ENCODE measurements at regions of chr2 and their contacts with region 1.

Region 1: GRCh38 chr2:71157124-71157793 is 26.8 kb downstream of the MPHOSPH10 start:
- DNase-seq: peak; percentile 31 to 75 (median 48)
- ATAC-seq: peak; percentile 70
- H3K4me3 ChIP-seq: no peak overlapping the region
- H3K4me3 Mint-ChIP-seq: no peak overlapping the region
- H3K27ac ChIP-seq: no peak overlapping the region
- H3K27ac Mint-ChIP-seq: no peak overlapping the region
- H3K4me1 ChIP-seq: peaks cover 10% of the 10 kb centered on the region
- H3K4me1 Mint-ChIP-seq: peaks cover 7% of the 10 kb centered on the region
- H3K27me3 ChIP-seq: no peaks in the 10 kb centered on the region
- H3K27me3 Mint-ChIP-seq: peaks cover 20% of the 10 kb centered on the region
- CTCF ChIP-seq: peak; percentile 66

Region 2: DNA sequence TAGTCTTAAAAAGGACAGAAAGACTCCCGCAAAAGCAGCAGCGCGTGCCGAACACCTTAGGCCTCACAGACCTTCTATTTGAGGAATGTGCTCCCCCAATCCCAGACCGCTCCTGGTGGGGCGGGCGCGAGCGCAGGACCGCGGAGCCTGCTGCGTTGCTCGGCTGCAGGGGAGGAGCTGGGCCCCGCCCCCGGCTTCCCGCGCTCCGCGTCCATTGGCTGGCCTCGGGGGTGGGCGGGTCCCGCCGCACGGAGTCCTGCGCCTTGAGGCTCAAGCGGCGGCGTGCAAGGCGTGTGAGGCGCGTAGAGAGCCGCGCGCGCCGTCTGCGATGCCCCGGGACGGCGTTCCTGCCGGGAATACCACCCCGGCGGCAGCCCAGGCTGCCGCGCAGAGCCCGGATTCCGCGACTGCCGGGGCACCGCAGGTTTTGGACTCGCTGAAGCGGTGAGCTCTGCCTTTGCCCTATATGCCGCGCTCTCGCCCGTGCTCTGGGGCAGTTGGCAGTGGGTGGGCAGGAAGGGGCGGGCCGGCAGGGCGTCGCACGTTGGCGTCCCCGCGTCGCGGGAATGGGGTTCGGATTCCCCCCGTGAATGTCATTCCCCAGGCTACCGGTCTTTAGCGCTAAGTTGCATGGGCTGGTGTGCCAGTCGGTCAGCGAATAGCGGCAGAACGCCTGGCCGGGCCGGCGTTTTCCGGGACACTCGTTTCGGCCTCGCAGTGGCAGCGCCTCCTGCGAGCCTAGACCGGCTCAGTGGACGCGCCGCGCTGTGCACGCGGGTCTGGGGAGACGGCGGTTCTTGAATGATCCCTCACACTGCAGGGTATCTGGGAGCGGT is 119.3 kb after region 1 on chr2:
- CTCF ChIA-PET with region 1: no interaction called
- POLR2A ChIA-PET with region 1: no interaction called
- intact Hi-C with region 1: loop called in 1 of 2 experiments (anchors 5 kb)
- DNase-seq: peak; percentile 65 to 90 (median 80)
- ATAC-seq: peak; percentile 100
- H3K4me3 ChIP-seq: peak overlapping the region; percentile 58
- H3K4me3 Mint-ChIP-seq: peak overlapping the region; percentile 78
- H3K27ac ChIP-seq: no peak overlapping the region
- H3K27ac Mint-ChIP-seq: no peak overlapping the region
- H3K4me1 ChIP-seq: peaks cover 21% of the 10 kb centered on the region
- H3K4me1 Mint-ChIP-seq: peaks cover 11% of the 10 kb centered on the region
- H3K27me3 ChIP-seq: peaks cover 31 to 53% of the 10 kb centered on the region in 2 experiments
- H3K27me3 Mint-ChIP-seq: peaks cover 94% of the 10 kb centered on the region
- CTCF ChIP-seq: no peak

Region 3: DNA sequence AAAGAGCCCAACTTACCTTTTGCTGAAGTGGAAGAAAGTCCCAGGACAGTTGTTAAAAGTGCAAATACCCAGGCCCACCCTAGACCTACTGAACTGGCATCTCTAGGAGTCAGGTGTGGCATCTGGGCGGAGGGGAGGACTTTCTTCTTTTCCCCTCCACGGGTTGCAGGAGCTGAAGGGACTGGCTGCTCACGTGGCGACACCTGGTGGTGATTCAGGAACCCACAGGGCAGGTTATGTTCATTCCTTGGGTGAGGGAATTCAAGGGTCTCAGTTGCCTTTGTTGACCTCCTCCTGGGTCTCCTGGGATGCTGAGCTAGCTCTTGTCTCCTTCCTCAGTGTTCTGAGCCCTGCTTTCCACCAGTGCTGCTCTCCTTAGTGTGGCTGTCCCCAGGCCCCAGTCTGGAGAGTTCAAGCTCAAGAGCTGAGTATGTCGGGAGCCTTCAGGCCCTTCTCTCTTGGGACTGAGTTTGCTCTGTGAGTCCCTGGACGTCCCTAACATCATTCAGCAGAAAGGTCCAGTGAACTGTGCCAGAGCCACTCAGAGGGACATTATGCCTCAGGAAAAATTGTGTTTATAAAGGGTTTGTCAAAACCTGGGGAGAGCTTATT is 353.0 kb after region 1 on chr2:
- CTCF ChIA-PET with region 1: interaction called, 3 read pairs
- POLR2A ChIA-PET with region 1: no interaction called
- intact Hi-C with region 1: loop called (anchors 1 kb)
- DNase-seq: peak; percentile 55 to 82 (median 64)
- ATAC-seq: peak; percentile 62
- H3K4me3 ChIP-seq: no peak overlapping the region
- H3K4me3 Mint-ChIP-seq: no peak overlapping the region
- H3K27ac ChIP-seq: no peak overlapping the region
- H3K27ac Mint-ChIP-seq: no peak overlapping the region
- H3K4me1 ChIP-seq: no peaks in the 10 kb centered on the region
- H3K4me1 Mint-ChIP-seq: no peaks in the 10 kb centered on the region
- H3K27me3 ChIP-seq: no peaks in the 10 kb centered on the region
- H3K27me3 Mint-ChIP-seq: no peaks in the 10 kb centered on the region
- CTCF ChIP-seq: peak; percentile 88